ENCODE measurements at regions of chr9 and their contacts with region 1.

Region 1: DNA sequence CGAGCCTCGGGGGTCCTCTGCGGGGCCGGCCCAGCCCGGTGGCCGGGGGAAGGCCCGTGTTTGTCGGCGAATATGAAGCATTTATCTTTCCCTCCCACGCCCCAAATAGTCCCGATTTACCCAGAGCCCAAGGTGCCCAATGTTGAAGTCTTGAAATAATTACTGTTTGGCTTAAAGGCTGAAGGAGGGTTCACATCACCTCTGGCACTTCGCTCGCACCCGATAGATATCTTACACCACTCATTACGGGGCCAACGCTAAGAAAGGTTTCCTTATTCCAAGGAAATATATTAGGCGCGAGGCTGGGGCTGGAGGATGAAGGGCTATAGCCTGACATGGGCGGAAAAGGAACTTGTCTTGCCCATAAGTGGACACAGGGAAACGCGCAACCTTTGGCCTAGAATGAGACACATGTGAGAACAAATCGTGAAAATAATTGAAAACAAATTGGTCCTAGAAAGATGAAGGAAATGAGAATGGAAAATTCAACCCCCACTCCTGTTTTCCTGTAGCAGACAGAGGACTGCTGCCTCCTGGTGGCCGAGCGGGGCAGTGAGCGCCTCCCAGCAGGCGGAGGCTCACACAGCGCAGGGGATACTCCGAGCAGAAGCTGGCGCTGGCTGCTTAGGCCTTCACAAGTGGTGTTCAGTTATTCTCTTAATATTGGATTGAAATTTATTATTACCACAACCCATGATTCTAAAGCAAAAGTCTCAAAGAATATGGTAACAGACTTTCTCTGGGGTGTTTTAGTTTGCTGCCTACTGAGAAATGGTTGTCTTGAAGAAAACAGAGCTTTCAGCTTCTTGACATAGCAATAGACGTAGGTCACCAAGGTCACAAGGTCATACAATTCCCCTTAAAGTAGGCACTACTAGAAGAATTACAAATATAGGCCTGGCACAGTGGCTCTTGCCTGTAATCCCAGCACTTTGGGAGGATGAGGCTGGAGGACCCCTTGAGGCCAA is 7.9 kb downstream of the CCL21 start:
- DNase-seq: peak; percentile 68
- ATAC-seq: peak; percentile 82
- H3K4me3 Mint-ChIP-seq: peak overlapping the region; percentile 73
- H3K27ac Mint-ChIP-seq: no peak overlapping the region
- H3K4me1 Mint-ChIP-seq: peaks cover 8% of the 10 kb centered on the region
- H3K27me3 Mint-ChIP-seq: peaks cover 20% of the 10 kb centered on the region
- CTCF ChIP-seq: peak; percentile 27

Region 2: GRCh38 chr9:34611829-34612630 is 90.0 kb before region 1 on chr9 and contains the start of gene RPP25L:
- CTCF ChIA-PET with region 1: interaction called, 5 read pairs
- POLR2A ChIA-PET with region 1: interaction called, 4 read pairs
- intact Hi-C with region 1: loop called (anchors 1 kb)
- DNase-seq: peak; percentile 90
- ATAC-seq: peak; percentile 96
- H3K4me3 Mint-ChIP-seq: peak within 1 kb of the TSS; percentile 86
- H3K27ac Mint-ChIP-seq: peak within 1 kb of the TSS; percentile 90
- H3K4me1 Mint-ChIP-seq: peaks cover 19% of the 10 kb centered on the region
- H3K27me3 Mint-ChIP-seq: no peaks in the 10 kb centered on the region
- CTCF ChIP-seq: no peak
- total RNA-seq, gene RPP25L: 17.5 and 18.9 TPM in 2 replicates

Region 3: GRCh38 chr9:34665381-34666250 is 36.4 kb before region 1 on chr9:
- CTCF ChIA-PET with region 1: interaction called, 14 read pairs
- POLR2A ChIA-PET with region 1: no interaction called
- intact Hi-C with region 1: loop called (anchors 1 kb)
- DNase-seq: peak; percentile 75
- ATAC-seq: peak; percentile 90
- H3K4me3 Mint-ChIP-seq: peak overlapping the region; percentile 88
- H3K27ac Mint-ChIP-seq: peak overlapping the region; percentile 87
- H3K4me1 Mint-ChIP-seq: peaks cover 11% of the 10 kb centered on the region
- H3K27me3 Mint-ChIP-seq: no peaks in the 10 kb centered on the region
- CTCF ChIP-seq: no peak

Region 4: DNA sequence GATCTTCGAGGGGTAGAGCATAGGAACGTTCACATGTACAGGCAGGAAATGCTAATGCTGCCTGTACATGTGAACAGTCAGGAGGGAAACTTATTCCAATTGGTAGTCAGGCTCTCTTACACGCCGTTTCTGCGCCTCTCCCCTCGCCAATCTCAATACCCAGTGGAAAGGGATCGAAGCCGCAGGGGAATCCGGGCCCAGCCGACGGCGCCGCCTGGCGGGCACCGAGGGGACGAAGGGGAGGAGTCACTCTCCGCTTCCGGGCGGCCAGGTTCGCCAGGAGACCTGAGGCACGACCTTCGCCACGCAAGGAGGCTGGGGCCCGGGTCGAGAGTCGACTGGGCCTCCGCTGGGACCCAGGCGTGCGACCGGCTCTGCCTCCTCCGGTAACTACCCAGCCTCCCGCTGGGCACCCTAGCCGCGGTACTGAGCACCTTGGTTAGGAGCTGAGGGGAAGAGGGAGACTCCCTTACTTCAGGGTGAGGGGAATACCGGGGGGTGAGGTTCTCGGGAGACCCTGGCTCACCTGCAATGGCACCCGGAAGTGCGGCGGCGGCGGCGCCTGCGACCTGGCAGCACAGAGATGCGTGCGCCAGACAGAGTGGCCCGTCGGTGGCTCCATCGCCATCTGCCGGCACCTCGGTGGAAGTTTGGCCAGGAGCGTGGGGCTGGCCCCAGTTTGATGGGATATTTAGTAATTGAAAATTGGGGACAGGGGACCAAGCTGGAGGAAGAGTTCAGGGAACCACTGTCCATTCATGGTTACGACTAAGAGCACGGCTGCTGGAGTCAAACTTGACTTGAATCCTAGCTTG is 394.2 kb after region 1 on chr9 and contains the start of gene PIGO:
- CTCF ChIA-PET with region 1: no interaction called
- POLR2A ChIA-PET with region 1: no interaction called
- intact Hi-C with region 1: loop called (anchors 5 kb)
- DNase-seq: peak; percentile 81
- ATAC-seq: peak; percentile 92
- H3K4me3 Mint-ChIP-seq: peak within 1 kb of the TSS; percentile 87
- H3K27ac Mint-ChIP-seq: peak within 1 kb of the TSS; percentile 93
- H3K4me1 Mint-ChIP-seq: peaks cover 30% of the 10 kb centered on the region
- H3K27me3 Mint-ChIP-seq: no peaks in the 10 kb centered on the region
- CTCF ChIP-seq: peak; percentile 60
- total RNA-seq, gene PIGO: 30.4 and 34.1 TPM in 2 replicates

Measured in activated B cell treated with CpG ODN at 0.5 μM for 24 hours (primary cell).